ENCODE measurements at regions of chr11 and their contacts with region 1.

Region 1: DNA sequence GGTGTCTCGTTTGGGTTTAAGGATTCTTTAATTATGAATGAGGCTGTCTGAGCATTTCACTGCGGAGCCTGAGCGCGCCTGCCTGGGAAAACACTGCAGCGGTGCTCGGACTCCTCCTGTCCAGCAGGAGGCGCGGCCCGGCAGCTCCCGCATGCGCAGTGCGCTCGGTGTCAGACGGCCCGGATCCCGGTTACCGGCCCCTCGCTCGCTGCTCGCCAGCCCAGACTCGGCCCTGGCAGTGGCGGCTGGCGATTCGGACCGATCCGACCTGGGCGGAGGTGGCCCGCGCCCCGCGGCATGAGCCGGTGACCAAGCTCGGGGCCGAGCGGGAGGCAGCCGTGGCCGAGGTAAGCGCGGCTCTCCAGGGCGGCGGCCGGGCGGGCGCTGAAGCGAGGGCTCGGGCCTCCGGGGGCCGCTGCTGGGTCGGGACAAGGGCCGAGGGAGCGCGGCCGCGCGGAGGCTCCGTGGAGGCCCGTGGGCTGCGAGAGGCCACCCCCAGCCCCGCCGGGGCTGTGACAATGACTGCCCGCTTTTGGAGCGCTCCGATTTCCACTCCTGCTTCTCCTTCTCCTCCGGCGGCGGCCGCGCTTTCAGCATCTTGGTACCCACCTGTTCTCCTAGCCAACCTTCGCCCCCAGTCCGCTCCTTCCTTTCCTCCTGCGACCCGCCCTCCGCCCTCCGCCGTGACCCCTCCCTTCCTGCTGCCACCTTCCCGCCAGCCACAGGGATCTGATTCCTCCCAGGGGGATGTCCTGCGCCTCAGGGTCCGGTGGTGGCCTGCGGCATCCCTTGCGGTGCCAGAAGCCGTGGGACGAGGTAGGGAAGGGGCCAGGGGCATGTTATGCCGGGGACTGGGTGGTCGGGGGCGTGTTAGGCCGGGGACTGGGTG is at the start of gene EXT2:
- DNase-seq: peak; percentile 91
- ATAC-seq: peak; percentile 94
- H3K4me3 ChIP-seq: peak within 1 kb of the TSS in 4 of 5 experiments; percentile 54 to 84 (median 72)
- H3K4me3 Mint-ChIP-seq: peak within 1 kb of the TSS; percentile 90
- H3K27ac ChIP-seq: peak within 1 kb of the TSS in 1 of 2 donors; percentile 76
- H3K27ac Mint-ChIP-seq: peak within 1 kb of the TSS; percentile 69
- H3K4me1 ChIP-seq: peaks cover 15 to 18% of the 10 kb centered on the region in 2 donors
- H3K4me1 Mint-ChIP-seq: peaks cover 30% of the 10 kb centered on the region
- H3K27me3 ChIP-seq: no peaks in the 10 kb centered on the region
- H3K27me3 Mint-ChIP-seq: no peaks in the 10 kb centered on the region
- CTCF ChIP-seq: peak; percentile 95
- total RNA-seq, gene EXT2: 27.7 and 27.8 TPM in 2 replicates

Region 2: GRCh38 chr11:43311791-43312607 is 783.8 kb before region 1 on chr11 and contains the start of gene API5:
- CTCF ChIA-PET with region 1: no interaction called
- POLR2A ChIA-PET with region 1: no interaction called
- intact Hi-C with region 1: loop called (anchors 10 kb)
- DNase-seq: peak; percentile 96
- ATAC-seq: peak; percentile 97
- H3K4me3 ChIP-seq: peak within 1 kb of the TSS; percentile 86 to 97 (median 95)
- H3K4me3 Mint-ChIP-seq: peak within 1 kb of the TSS; percentile 96
- H3K27ac ChIP-seq: peak within 1 kb of the TSS; percentile 67 to 84
- H3K27ac Mint-ChIP-seq: peak within 1 kb of the TSS; percentile 97
- H3K4me1 ChIP-seq: peaks cover 18 to 20% of the 10 kb centered on the region in 2 donors
- H3K4me1 Mint-ChIP-seq: peaks cover 45% of the 10 kb centered on the region
- H3K27me3 ChIP-seq: no peaks in the 10 kb centered on the region
- H3K27me3 Mint-ChIP-seq: no peaks in the 10 kb centered on the region
- CTCF ChIP-seq: peak; percentile 83
- total RNA-seq, gene API5: 88.3 and 94.7 TPM in 2 replicates

Region 3: DNA sequence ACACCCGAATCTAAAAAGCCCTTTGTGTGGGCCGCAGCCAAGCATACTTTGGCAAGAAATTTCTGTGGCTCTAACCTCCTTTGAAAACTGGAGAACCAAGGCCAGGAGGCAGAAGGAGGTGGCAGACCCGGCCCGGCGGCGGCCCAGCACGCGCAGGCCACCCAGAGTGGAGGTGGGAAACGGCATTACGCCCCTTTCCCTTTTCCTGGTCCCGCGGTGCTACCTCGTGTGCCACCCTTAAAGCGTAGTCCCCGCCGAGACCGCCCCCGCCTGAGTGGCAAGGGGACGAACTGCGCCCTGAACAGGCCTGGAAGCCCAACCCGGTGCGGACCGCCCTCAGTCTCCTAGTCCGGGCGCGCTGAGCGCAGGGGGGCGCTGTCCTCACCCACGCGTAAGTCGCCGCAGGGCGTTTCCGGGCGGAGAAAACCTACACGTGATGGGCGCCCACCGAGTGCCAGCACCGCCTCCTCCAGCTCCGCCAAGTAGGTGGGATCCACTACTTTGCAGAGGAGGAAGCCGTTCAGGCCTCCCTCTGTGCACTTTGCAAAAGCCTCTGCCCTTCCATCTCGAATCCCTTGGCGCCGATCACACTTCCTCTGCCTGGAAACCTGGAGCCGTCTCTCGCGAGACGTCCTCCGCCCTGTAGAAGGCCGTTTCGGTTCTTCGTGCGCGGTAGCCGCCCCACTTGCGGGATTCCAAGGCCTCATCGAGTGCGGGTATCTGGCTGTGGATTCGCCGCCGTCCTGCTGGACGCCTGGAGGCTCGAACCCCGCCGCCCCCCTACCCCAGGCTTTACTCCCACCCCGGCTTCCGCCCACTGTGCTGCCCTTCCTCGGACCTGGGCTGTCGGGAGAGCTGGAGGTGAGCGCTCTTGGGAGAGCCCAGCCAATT is 29.7 kb before region 1 on chr11 and contains the start of gene ACCS:
- CTCF ChIA-PET with region 1: interaction called, 34 read pairs
- POLR2A ChIA-PET with region 1: interaction called, 3 read pairs
- intact Hi-C with region 1: loop called (anchors 1 kb)
- DNase-seq: peak; percentile 94
- ATAC-seq: peak; percentile 96
- H3K4me3 ChIP-seq: peak within 1 kb of the TSS; percentile 32 to 85 (median 81)
- H3K4me3 Mint-ChIP-seq: peak within 1 kb of the TSS; percentile 97
- H3K27ac ChIP-seq: peak within 1 kb of the TSS; percentile 71 to 77
- H3K27ac Mint-ChIP-seq: peak within 1 kb of the TSS; percentile 91
- H3K4me1 ChIP-seq: peaks cover 6 to 18% of the 10 kb centered on the region in 2 donors
- H3K4me1 Mint-ChIP-seq: peaks cover 22% of the 10 kb centered on the region
- H3K27me3 ChIP-seq: no peaks in the 10 kb centered on the region
- H3K27me3 Mint-ChIP-seq: no peaks in the 10 kb centered on the region
- CTCF ChIP-seq: peak; percentile 87
- total RNA-seq, gene ACCS: 56.2 and 59.5 TPM in 2 replicates

Region 4: GRCh38 chr11:44083906-44084305 is 11.8 kb before region 1 on chr11:
- CTCF ChIA-PET with region 1: interaction called, 18 read pairs
- POLR2A ChIA-PET with region 1: no interaction called
- intact Hi-C with region 1: no loop called
- DNase-seq: no peak
- ATAC-seq: no peak
- H3K4me3 ChIP-seq: no peak overlapping the region
- H3K4me3 Mint-ChIP-seq: no peak overlapping the region
- H3K27ac ChIP-seq: no peak overlapping the region
- H3K27ac Mint-ChIP-seq: no peak overlapping the region
- H3K4me1 ChIP-seq: no peaks in the 10 kb centered on the region
- H3K4me1 Mint-ChIP-seq: no peaks in the 10 kb centered on the region
- H3K27me3 ChIP-seq: no peaks in the 10 kb centered on the region
- H3K27me3 Mint-ChIP-seq: no peaks in the 10 kb centered on the region
- CTCF ChIP-seq: no peak

Region 5: DNA sequence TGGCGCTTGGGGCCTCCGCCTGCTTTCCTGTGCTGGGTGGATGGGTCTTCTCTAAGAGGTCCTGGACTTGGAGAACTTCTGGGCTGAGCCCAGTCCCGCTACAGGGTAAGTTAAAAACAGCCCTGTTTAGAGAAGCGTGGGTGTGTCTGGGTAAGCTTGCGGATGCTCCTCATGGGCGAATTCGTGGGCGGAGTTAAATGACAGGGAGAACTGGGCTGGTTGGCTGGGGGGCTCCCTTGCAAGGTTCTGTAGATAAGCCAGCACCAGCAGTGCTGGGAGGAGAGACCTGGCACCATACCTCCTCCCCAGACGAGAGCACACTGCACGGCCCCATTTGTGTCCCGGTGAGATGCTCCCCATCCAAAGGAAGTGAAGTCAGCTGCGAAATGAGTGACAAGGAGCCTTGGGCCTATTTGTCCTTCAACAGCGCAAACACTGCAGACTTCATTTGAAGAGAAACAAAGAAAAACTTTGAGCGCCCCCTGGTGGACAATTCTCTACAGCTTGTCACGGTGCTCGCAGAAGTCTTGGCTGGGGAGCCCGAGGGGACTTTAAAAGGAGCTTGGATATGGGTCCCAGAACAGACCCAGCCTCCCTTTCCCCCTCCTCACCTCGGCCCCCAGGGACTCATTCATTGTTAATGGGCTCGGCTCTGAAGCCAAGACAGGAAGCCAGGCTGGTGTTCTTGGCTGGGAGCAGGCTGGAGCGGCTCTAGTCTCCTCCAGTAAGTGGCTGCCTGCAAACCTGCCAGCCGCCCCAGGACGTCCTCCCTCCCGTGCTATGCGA is 815.5 kb after region 1 on chr11:
- CTCF ChIA-PET with region 1: interaction called, 4 read pairs
- POLR2A ChIA-PET with region 1: no interaction called
- intact Hi-C with region 1: loop called (anchors 1 kb)
- DNase-seq: peak; percentile 85
- ATAC-seq: peak; percentile 69
- H3K4me3 ChIP-seq: no peak overlapping the region
- H3K4me3 Mint-ChIP-seq: no peak overlapping the region
- H3K27ac ChIP-seq: no peak overlapping the region
- H3K27ac Mint-ChIP-seq: no peak overlapping the region
- H3K4me1 ChIP-seq: peaks cover 23 to 31% of the 10 kb centered on the region in 2 donors
- H3K4me1 Mint-ChIP-seq: peaks cover 24% of the 10 kb centered on the region
- H3K27me3 ChIP-seq: peaks cover 0 to 5% (median 0%) of the 10 kb centered on the region in 4 experiments
- H3K27me3 Mint-ChIP-seq: peaks cover 4% of the 10 kb centered on the region
- CTCF ChIP-seq: peak; percentile 82

Measured in B cell (primary cell).